Tibial artery (tissue), 4 donors: ENCODE measurements at regions of chr2 and their contacts with region 1.

Region 1: DNA sequence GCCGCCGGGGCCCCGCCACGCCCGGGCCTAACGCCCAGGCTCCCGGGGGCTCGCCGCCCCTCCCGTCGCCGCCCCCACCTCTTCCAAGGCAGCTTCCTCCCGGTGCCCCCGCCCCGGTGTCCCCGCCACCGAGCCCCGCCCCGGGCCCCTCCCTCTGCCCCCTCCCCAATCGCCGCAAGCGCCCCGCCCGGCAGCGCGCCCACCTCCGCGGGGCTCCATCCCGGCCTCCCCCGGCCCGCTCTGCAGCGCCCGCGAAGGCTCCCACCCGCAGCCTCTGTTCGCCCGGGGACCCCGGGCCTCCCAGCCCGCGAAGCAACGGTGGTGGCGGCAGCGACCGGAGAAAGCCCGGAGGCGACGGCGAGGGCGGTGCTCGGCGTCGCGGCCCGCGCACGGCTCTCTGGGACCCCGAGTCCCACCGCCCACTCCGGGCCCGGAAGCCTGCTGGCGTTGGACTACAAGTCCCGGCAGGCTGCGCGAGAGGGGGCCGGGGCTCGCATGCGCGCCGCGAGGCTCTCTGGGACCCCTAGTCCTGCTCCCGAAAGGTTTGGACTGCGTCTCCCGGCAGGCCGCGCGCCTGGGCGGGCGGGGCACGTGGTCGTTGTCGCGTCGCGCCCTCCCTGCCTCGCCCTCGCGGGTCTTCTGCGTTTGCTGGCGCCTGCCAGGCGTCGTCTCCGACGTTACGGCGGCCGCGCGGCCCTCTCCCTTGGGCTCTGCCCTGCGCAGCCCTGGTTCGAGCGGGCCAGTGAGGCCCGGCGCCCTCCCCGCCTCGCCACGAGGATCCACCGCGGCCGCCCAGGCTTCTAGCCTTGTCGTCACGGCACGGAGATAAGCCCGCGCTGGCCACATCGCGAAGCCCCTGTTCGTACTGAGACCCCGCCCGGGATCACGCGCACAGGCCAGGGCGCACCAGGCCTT is at the start of gene STK25:
- DNase-seq: peak; percentile 96 to 98
- H3K4me3 ChIP-seq: peak within 1 kb of the TSS; percentile 86
- H3K27ac ChIP-seq: peak within 1 kb of the TSS; percentile 75 to 89
- H3K4me1 ChIP-seq: peaks cover 0 to 48% (median 28%) of the 10 kb centered on the region in 4 donors
- H3K27me3 ChIP-seq: no peaks in the 10 kb centered on the region
- CTCF ChIP-seq: no peak

Region 2: GRCh38 chr2:241391892-241392665 is 116.4 kb before region 1 on chr2:
- intact Hi-C with region 1: no loop called
- DNase-seq: peak in 1 of 2 donors; percentile 26
- H3K4me3 ChIP-seq: no peak overlapping the region
- H3K27ac ChIP-seq: no peak overlapping the region
- H3K4me1 ChIP-seq: peaks cover 0 to 5% (median 4%) of the 10 kb centered on the region in 4 donors
- H3K27me3 ChIP-seq: no peaks in the 10 kb centered on the region
- CTCF ChIP-seq: peak; percentile 41 to 45

Region 3: GRCh38 chr2:241559323-241560189 is 51.1 kb after region 1 on chr2:
- intact Hi-C with region 1: loop called (anchors 5 kb)
- DNase-seq: no peak
- H3K4me3 ChIP-seq: peak overlapping the region; percentile 50 to 64
- H3K27ac ChIP-seq: no peak overlapping the region
- H3K4me1 ChIP-seq: peaks cover 0 to 50% (median 34%) of the 10 kb centered on the region in 4 donors
- H3K27me3 ChIP-seq: peaks cover 0 to 29% of the 10 kb centered on the region in 2 donors
- CTCF ChIP-seq: no peak

Region 4: GRCh38 chr2:241609859-241610793 is 101.6 kb after region 1 on chr2:
- intact Hi-C with region 1: loop called (anchors 5 kb)
- DNase-seq: peak; percentile 66 to 89
- H3K4me3 ChIP-seq: peak overlapping the region; percentile 59 to 81
- H3K27ac ChIP-seq: peak overlapping the region; percentile 80 to 82
- H3K4me1 ChIP-seq: peaks cover 0 to 18% (median 12%) of the 10 kb centered on the region in 4 donors
- H3K27me3 ChIP-seq: no peaks in the 10 kb centered on the region
- CTCF ChIP-seq: peak; percentile 61 to 62